Posterior cingulate gyrus (tissue), 11 donors: ENCODE measurements at regions of chr11 and their contacts with region 1.

Region 1: GRCh38 chr11:47886096-47886495 is 37.9 kb upstream of the NUP160 start:
- DNase-seq: no peak

Region 2: GRCh38 chr11:47631473-47631872 is 254.6 kb before region 1 on chr11:
- intact Hi-C with region 1: no loop called
- DNase-seq: no peak

Region 3: GRCh38 chr11:47946682-47947575 is 60.8 kb after region 1 on chr11:
- intact Hi-C with region 1: loop called (anchors 10 kb)
- DNase-seq: peak in 3 of 10 donors; percentile 21 to 42 (median 26)